H1 (cell line): ENCODE measurements at regions of chr10 and their contacts with region 1.

Region 1: GRCh38 chr10:78047314-78047891 is 13.7 kb downstream of the RPS24 start:
- DNase-seq: peak; percentile 86 to 98
- H3K4me3 ChIP-seq: no peak overlapping the region
- H3K27ac ChIP-seq: no peak overlapping the region
- H3K4me1 ChIP-seq: peaks cover 4 to 5% (median 4%) of the 10 kb centered on the region in 4 experiments; a peak in 6 of 7 replicates
- H3K27me3 ChIP-seq: no peaks in the 10 kb centered on the region
- CTCF ChIP-seq: peak; percentile 87 to 98 (median 97)
- EP300 ChIP-seq: no peak
- POLR2A ChIP-seq: no peak
- RAD21 ChIP-seq: peak; percentile 98 to 99

Region 2: DNA sequence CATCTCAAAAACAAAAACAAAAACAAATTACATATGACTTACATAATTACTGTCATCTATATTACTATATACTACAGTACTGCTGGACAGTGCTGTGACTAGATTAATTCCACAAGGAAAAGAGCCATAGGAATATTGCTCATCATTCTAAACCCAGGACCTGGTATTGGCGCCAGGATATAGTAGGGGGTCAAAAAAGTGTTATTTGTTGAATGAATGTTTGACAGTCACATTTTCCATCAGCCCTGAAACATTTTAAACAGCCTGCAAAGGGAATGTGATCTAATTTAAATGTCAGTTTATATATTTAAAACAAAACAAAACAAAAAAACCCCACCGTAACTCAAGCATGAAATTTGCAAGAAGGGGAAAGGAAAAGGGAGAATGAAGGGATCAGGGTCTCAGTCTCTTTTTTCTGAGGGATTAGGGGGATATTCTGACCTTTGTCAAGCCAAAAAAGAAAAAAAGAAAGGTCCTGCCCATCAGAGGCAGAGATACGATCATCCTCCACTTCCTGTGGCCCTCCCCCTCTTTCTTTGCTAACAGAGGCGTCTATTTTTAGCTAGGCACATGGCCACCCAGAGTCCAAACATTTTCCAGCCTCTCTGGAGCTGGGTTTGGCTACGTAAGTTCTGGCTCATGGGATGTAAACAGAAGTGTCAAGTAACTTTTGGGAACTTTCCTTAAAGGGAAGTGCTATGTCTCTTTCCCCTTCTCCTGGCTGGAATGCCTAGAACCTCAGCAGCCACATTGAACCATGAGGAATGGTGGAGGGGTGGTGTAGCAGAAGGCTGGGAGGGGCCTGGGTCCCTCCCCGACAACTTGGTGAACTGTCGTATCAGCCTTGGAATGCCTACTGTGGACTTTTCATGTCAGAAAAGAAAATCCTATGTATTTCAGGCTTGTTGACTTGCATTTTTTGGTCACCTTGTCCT is 76.3 kb before region 1 on chr10:
- CTCF ChIA-PET with region 1: no interaction called
- POLR2A ChIA-PET with region 1: no interaction called
- DNase-seq: no peak
- H3K4me3 ChIP-seq: no peak overlapping the region
- H3K27ac ChIP-seq: peak overlapping the region; percentile 27; the same call in 1 of the 2 replicates
- H3K4me1 ChIP-seq: peaks cover 0 to 6% (median 0%) of the 10 kb centered on the region in 4 experiments; a peak in 2 of 7 replicates
- H3K27me3 ChIP-seq: no peaks in the 10 kb centered on the region
- CTCF ChIP-seq: no peak
- EP300 ChIP-seq: no peak
- POLR2A ChIP-seq: no peak
- RAD21 ChIP-seq: no peak

Region 3: DNA sequence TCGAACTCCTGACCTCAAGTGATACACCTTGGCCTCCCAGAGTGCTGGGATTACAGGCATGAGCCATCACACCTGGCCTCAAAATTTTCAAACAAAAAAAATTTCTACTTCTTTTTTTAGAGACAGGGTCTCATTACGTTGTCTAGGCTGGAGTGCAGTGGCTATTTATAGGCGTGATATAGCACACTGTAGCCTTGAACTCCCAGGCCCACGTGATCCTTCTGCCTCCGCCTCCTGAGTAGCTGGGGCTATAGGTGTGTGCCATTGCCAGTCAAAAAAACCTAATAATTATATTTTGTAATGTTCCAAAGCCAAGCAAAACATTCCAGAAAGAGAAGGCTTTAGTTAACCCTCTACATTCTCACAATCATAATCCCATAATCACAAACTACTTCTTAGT is 31.9 kb before region 1 on chr10:
- CTCF ChIA-PET with region 1: no interaction called
- POLR2A ChIA-PET with region 1: no interaction called
- DNase-seq: no peak
- H3K4me3 ChIP-seq: no peak overlapping the region
- H3K27ac ChIP-seq: no peak overlapping the region
- H3K4me1 ChIP-seq: no peaks in the 10 kb centered on the region
- H3K27me3 ChIP-seq: no peaks in the 10 kb centered on the region
- CTCF ChIP-seq: no peak
- EP300 ChIP-seq: no peak
- POLR2A ChIP-seq: no peak
- RAD21 ChIP-seq: no peak

Region 4: GRCh38 chr10:78079411-78079810 is 32.0 kb after region 1 on chr10:
- CTCF ChIA-PET with region 1: interaction called, 10 read pairs
- POLR2A ChIA-PET with region 1: interaction called, 4 read pairs
- DNase-seq: no peak
- H3K4me3 ChIP-seq: no peak overlapping the region
- H3K27ac ChIP-seq: no peak overlapping the region
- H3K4me1 ChIP-seq: no peaks in the 10 kb centered on the region
- H3K27me3 ChIP-seq: no peaks in the 10 kb centered on the region
- CTCF ChIP-seq: no peak
- EP300 ChIP-seq: no peak
- POLR2A ChIP-seq: no peak
- RAD21 ChIP-seq: no peak

Region 5: GRCh38 chr10:78143576-78143975 is 96.2 kb after region 1 on chr10:
- CTCF ChIA-PET with region 1: interaction called, 22 read pairs
- POLR2A ChIA-PET with region 1: interaction called, 4 read pairs
- DNase-seq: no peak
- H3K4me3 ChIP-seq: no peak overlapping the region
- H3K27ac ChIP-seq: no peak overlapping the region
- H3K4me1 ChIP-seq: no peaks in the 10 kb centered on the region; a peak in 1 of 7 replicates
- H3K27me3 ChIP-seq: no peaks in the 10 kb centered on the region
- CTCF ChIP-seq: no peak
- EP300 ChIP-seq: no peak
- POLR2A ChIP-seq: no peak
- RAD21 ChIP-seq: no peak

Region 6: GRCh38 chr10:78175444-78176015 is 128.1 kb after region 1 on chr10:
- CTCF ChIA-PET with region 1: interaction called, 80 read pairs
- POLR2A ChIA-PET with region 1: interaction called, 5 read pairs
- DNase-seq: no peak
- H3K4me3 ChIP-seq: no peak overlapping the region
- H3K27ac ChIP-seq: no peak overlapping the region
- H3K4me1 ChIP-seq: peaks cover 6 to 25% (median 19%) of the 10 kb centered on the region in 4 experiments
- H3K27me3 ChIP-seq: no peaks in the 10 kb centered on the region
- CTCF ChIP-seq: no peak
- EP300 ChIP-seq: no peak
- POLR2A ChIP-seq: no peak
- RAD21 ChIP-seq: no peak

Region 7: GRCh38 chr10:78258323-78259030 is 211.1 kb after region 1 on chr10:
- CTCF ChIA-PET with region 1: interaction called, 12 read pairs
- POLR2A ChIA-PET with region 1: interaction called, 5 read pairs
- DNase-seq: no peak
- H3K4me3 ChIP-seq: no peak overlapping the region
- H3K27ac ChIP-seq: no peak overlapping the region
- H3K4me1 ChIP-seq: 0 out of 7 replicates have a peak, but pooled peaks cover 0 to 2% (median 0%) of the 10 kb centered on the region in 4 experiments
- H3K27me3 ChIP-seq: no peaks in the 10 kb centered on the region
- CTCF ChIP-seq: peak in 2 of 3 experiments; percentile 31 to 58; a peak in 3 of 4 replicates
- EP300 ChIP-seq: no peak
- POLR2A ChIP-seq: no peak
- RAD21 ChIP-seq: peak; percentile 57 to 60

Region 8: DNA sequence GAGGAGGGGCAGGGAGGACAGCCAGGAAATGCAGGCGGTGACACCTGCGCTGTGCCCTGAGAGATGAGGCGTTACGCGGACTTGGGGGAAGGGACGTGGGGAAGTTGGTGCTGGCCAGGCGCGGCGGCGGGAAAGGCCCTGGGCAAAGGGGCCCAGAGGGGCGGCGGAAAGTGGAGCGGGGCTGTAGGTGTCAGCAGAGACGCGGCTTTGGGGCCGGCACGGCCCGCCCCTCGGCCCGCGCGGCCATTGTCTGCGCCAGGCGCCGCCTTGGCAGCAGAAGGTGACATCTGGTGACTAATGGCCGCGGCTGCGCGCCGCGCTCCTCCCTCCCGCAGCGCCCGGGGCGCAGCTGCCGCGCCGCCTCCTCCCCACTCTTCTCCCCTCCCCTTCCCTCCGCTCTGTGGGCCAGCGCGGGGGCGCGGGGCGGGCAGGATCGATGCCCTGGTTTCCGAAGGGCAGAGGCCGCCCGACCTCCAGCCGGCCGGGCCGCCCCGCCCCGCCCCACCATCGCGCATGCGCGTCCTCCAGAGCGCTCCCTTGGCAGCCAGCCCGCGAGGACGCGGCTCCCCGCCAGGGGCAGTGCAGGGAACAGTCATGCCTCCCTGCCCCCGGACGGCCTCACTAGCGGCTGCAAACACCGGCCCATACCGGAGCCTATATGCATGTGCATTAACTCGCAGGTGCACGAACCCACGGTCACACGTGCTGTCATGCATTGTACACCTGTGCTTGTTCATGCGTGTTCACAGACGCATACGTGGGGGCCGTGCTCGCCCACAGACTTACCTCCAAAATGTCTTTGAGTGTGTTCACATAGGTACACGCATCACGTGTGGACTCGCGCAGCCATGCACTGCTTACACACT is 255.8 kb after region 1 on chr10:
- CTCF ChIA-PET with region 1: interaction called, 16 read pairs
- POLR2A ChIA-PET with region 1: interaction called, 4 read pairs
- DNase-seq: peak; percentile 77 to 97
- H3K4me3 ChIP-seq: peak overlapping the region; percentile 46 to 65 (median 53)
- H3K27ac ChIP-seq: peak overlapping the region; percentile 37; the same call in 1 of the 2 replicates
- H3K4me1 ChIP-seq: peaks cover 7 to 10% (median 7%) of the 10 kb centered on the region in 4 experiments
- H3K27me3 ChIP-seq: 0 out of 7 replicates have a peak, but pooled peaks cover 0 to 3% (median 0%) of the 10 kb centered on the region in 4 experiments
- CTCF ChIP-seq: peak; percentile 71 to 94 (median 79)
- EP300 ChIP-seq: no peak
- POLR2A ChIP-seq: peak; percentile 56 to 88
- RAD21 ChIP-seq: peak; percentile 65 to 74

Region 9: GRCh38 chr10:78327778-78328591 is 280.6 kb after region 1 on chr10:
- CTCF ChIA-PET with region 1: no interaction called
- POLR2A ChIA-PET with region 1: no interaction called
- DNase-seq: peak in 1 of 2 experiments; percentile 29
- H3K4me3 ChIP-seq: no peak overlapping the region
- H3K27ac ChIP-seq: no peak overlapping the region
- H3K4me1 ChIP-seq: peaks cover 0 to 3% (median 0%) of the 10 kb centered on the region in 4 experiments; a peak in 2 of 7 replicates
- H3K27me3 ChIP-seq: no peaks in the 10 kb centered on the region
- CTCF ChIP-seq: no peak
- EP300 ChIP-seq: no peak
- POLR2A ChIP-seq: no peak
- RAD21 ChIP-seq: no peak